ENCODE measurements at regions of chr18 and their contacts with region 1.

Region 1: GRCh38 chr18:22408059-22408458 is 9.7 kb downstream of the CTAGE1 start:
- DNase-seq: no peak
- H3K4me3 ChIP-seq: no peak overlapping the region
- H3K27ac ChIP-seq: no peak overlapping the region
- H3K4me1 ChIP-seq: no peaks in the 10 kb centered on the region
- H3K27me3 ChIP-seq: no peaks in the 10 kb centered on the region
- CTCF ChIP-seq: no peak
- POLR2A ChIP-seq: no peak

Region 2: GRCh38 chr18:22441638-22442037 is 33.6 kb after region 1 on chr18:
- intact Hi-C with region 1: loop called in 1 of 2 experiments (anchors 5 kb)
- DNase-seq: no peak
- H3K4me3 ChIP-seq: no peak overlapping the region
- H3K27ac ChIP-seq: no peak overlapping the region
- H3K4me1 ChIP-seq: no peaks in the 10 kb centered on the region
- H3K27me3 ChIP-seq: no peaks in the 10 kb centered on the region
- CTCF ChIP-seq: no peak
- POLR2A ChIP-seq: no peak